Tibial artery (tissue), 4 donors: ENCODE measurements at regions of chr17 and their contacts with region 1.

Region 1: DNA sequence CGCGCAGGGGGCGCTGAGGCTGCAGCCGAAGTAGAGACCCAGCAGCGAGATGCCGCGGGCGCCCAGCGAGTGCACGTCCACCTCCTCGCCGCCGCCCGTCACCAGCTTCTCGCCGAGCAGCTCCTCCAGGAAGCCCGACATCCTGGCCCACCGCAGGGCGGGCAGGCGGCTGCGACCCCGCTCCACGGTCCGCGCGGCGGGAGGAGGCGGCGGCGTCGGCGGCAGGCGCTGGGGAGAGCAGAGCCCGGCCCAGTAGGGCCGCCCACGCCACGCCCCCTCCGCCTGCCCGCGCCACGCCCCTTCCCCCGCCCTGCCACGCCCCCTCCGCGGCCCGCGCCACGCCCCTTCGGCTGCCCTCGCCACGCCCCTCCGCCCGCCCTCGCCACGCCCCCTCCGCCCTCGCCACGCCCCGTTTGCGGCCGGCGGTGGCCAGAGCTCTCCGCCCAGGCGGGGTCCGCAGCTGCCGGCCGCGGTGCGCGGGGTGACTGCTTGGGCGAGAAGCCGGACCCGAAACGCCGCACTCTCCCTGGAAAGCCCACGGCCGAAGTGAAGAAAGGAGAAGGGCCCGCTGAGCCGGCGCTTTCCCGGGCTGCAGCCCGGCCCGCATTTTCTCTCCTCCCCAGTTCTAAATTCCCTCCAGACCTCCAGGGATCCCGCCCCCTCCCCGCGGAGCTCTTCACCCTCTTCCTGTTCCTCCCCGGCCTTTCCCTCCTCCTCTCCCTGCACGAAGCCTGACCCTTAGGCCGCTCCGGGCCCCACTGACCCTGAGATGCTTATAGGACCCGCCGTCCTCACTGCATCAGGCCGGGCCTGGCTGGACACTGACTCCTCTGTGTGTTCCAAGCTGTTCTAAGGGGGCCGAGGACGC is at the start of gene NXN:
- DNase-seq: peak; percentile 71 to 91
- H3K4me3 ChIP-seq: peak within 1 kb of the TSS; percentile 74 to 76
- H3K27ac ChIP-seq: peak within 1 kb of the TSS; percentile 76 to 81
- H3K4me1 ChIP-seq: peaks cover 0 to 43% (median 20%) of the 10 kb centered on the region in 4 donors
- H3K27me3 ChIP-seq: peaks cover 0 to 4% of the 10 kb centered on the region in 2 donors
- CTCF ChIP-seq: peak; percentile 11 to 35

Region 2: GRCh38 chr17:794876-795275 is 184.9 kb before region 1 on chr17:
- intact Hi-C with region 1: loop called (anchors 2 kb)
- DNase-seq: peak; percentile 85 to 90
- H3K4me3 ChIP-seq: peak overlapping the region; percentile 34 to 40
- H3K27ac ChIP-seq: peak overlapping the region in 1 of 2 donors; percentile 68
- H3K4me1 ChIP-seq: peaks cover 0 to 23% (median 9%) of the 10 kb centered on the region in 4 donors
- H3K27me3 ChIP-seq: no peaks in the 10 kb centered on the region
- CTCF ChIP-seq: peak; percentile 81 to 96

Region 3: GRCh38 chr17:915538-916201 is 64.1 kb before region 1 on chr17:
- intact Hi-C with region 1: loop called (anchors 10 kb)
- DNase-seq: no peak
- H3K4me3 ChIP-seq: no peak overlapping the region
- H3K27ac ChIP-seq: no peak overlapping the region
- H3K4me1 ChIP-seq: peaks cover 0 to 10% (median 3%) of the 10 kb centered on the region in 4 donors
- H3K27me3 ChIP-seq: no peaks in the 10 kb centered on the region
- CTCF ChIP-seq: no peak

Region 4: GRCh38 chr17:927611-928461 is 51.9 kb before region 1 on chr17:
- intact Hi-C with region 1: no loop called
- DNase-seq: no peak
- H3K4me3 ChIP-seq: no peak overlapping the region
- H3K27ac ChIP-seq: no peak overlapping the region
- H3K4me1 ChIP-seq: peaks cover 0 to 37% (median 18%) of the 10 kb centered on the region in 4 donors
- H3K27me3 ChIP-seq: no peaks in the 10 kb centered on the region
- CTCF ChIP-seq: no peak

Region 5: DNA sequence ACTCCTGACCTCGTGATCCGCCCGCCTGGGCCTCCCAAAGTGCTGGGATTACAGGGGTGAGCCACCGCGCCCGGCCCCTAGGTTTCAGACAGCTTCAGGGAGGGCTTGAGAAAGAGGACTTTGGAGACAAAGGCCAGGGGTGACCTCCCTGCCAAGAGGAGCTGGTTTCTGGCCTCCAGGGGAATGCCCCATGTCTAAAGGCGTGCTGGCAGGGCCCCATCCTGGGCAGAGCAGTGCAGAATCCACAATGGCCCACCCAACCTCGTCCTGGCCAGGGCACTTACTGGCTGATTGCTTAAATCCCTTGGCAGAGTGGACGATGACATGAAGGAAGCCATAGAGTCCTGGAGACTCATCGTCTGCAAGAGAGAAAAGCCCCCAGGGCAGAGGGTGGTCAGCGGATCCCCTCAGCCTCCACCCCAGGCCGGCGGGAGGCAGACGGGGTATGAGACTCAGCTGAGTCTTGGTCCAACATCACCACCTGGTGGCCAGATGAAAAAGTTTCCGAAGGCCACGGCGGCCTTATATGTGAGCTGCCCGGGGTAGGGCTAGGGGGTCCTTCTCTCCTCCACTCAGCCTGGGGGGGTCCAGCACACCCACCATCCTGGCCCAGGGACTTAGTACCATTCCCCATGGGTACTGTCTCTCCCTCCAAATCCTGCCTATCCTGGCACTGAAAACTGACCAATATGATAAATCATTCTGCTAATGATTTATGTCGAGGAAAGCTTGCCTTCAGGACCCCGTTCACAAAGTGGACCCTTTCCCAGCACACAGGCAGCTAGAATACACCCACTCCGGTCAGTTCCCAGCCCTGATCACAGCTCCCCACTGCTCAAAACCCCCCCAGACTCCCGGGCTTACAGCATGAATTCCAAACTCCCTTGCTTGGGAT is 76.2 kb after region 1 on chr17:
- intact Hi-C with region 1: loop called (anchors 5 kb)
- DNase-seq: peak in 1 of 2 donors; percentile 72
- H3K4me3 ChIP-seq: no peak overlapping the region
- H3K27ac ChIP-seq: peak overlapping the region; percentile 46 to 70
- H3K4me1 ChIP-seq: peaks cover 0 to 9% (median 2%) of the 10 kb centered on the region in 4 donors
- H3K27me3 ChIP-seq: no peaks in the 10 kb centered on the region
- CTCF ChIP-seq: peak; percentile 81 to 87